Mammary epithelial cell (primary cell): ENCODE measurements at regions of chr6 and their contacts with region 1.

Region 1: DNA sequence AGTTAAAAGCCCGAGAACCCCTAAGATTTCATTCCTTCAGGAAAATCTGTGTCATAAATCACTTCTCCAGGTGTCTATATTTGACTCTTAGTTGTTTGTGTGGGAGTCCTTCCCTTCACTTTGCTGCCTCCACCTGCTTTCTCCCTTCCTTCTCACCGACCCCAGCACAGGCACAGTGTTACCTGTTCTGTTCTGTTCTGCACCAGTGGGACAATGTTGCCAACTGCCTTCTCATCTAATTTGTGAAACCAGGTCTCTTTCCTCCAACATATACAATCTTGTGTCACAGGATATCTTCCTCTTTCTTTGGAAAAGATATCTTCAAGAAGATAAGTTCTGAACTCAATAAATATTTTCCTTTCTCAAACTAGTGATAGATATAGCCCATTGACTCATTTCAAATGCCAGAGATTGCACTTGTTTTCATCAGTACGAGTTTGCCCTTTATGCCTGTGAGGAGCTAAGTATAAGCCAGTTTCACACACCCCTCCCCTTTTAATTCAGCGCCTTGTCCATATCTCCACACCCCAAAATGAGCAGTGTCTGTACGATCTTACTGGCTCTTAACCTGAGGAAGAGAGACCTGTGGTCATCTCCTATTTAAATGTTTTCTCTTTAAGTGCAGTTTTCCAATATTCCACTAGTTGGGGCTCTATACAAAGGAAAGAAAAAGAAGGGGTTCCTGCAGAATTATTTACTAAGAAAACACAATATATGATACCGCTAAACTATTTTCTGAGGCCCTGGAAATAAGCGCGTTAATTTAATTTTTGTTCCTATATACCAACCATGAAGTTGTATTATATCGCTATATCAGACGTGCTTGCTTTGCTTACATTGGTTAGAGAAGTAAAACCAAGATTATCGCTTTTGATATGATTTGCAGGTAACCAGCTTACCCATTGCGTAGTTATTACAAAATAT is 81.6 kb upstream of the PREP start:
- DNase-seq: peak; percentile 57
- H3K4me3 ChIP-seq: no peak overlapping the region
- H3K27ac ChIP-seq: no peak overlapping the region
- H3K4me1 ChIP-seq: peaks cover 24% of the 10 kb centered on the region
- H3K27me3 ChIP-seq: no peaks in the 10 kb centered on the region
- CTCF ChIP-seq: peak; percentile 86 to 93

Region 2: DNA sequence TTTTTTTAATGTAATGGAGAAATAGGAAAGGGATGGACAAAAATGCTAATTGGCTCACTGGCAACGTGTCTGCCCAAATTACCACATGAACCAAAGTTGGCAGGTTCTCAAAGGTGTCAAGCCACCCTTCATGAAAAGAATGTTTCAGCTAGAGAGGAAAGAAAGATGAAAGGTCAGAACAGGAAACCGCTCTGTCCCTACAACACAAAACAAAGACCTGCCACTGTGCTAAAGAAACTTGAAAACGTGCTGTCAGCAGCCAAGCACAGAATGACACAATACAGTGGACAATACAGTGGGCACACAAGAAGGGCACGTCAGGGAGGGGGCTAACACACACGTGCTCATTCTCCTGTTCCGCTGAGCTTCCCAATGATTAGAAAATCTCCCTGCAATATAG is 86.5 kb before region 1 on chr6:
- CTCF ChIA-PET with region 1: no interaction called
- dilution Hi-C with region 1: no loop called
- in situ Hi-C with region 1: no loop called
- intact Hi-C with region 1: no loop called
- DNase-seq: no peak
- H3K4me3 ChIP-seq: no peak overlapping the region
- H3K27ac ChIP-seq: no peak overlapping the region
- H3K4me1 ChIP-seq: peaks cover 36% of the 10 kb centered on the region
- H3K27me3 ChIP-seq: no peaks in the 10 kb centered on the region
- CTCF ChIP-seq: no peak

Region 3: DNA sequence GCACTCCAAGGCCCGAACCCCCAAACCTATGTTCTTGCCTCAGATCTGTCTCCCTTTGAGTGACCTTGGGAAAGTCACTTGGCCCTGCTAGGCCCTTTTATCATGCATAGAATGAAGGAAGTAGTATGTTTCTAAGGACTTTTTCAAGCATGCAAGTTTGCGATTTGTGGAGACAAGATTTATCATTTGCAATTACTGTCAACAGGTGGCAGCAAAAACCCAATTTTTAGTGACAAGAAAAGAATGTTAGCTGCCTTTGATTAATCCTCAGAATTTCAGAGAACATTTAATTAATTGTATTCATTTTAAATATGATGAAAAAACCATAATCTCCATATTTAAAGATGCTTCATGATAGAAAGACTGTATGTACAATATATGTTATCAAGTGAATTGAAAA is 53.3 kb before region 1 on chr6:
- CTCF ChIA-PET with region 1: no interaction called
- dilution Hi-C with region 1: no loop called
- in situ Hi-C with region 1: no loop called
- intact Hi-C with region 1: loop called (anchors 1 kb)
- DNase-seq: peak; percentile 46
- H3K4me3 ChIP-seq: no peak overlapping the region
- H3K27ac ChIP-seq: no peak overlapping the region
- H3K4me1 ChIP-seq: peaks cover 35% of the 10 kb centered on the region
- H3K27me3 ChIP-seq: no peaks in the 10 kb centered on the region
- CTCF ChIP-seq: peak; percentile 57

Region 4: DNA sequence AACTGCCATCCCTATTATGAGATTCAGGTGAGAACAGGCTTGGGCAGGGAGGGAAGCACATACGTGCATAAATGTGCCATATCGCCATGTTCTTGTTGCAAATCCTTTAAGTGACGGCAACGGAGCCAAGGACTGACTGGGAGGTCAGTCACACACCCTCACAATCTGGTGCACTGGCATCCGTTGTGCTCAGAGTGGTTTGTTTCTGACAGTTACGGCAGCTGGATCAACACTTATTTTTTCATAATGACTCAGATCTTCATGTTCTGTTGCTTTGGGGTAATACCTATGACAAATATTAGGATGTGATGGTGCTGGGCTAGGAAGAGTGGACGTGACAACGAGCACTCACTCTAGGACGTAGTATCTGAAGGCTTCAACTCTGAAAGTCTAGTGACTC is 25.5 kb before region 1 on chr6:
- CTCF ChIA-PET with region 1: no interaction called
- dilution Hi-C with region 1: no loop called
- in situ Hi-C with region 1: no loop called
- intact Hi-C with region 1: no loop called
- DNase-seq: peak; percentile 65
- H3K4me3 ChIP-seq: no peak overlapping the region
- H3K27ac ChIP-seq: no peak overlapping the region
- H3K4me1 ChIP-seq: peaks cover 16% of the 10 kb centered on the region
- H3K27me3 ChIP-seq: no peaks in the 10 kb centered on the region
- CTCF ChIP-seq: no peak

Region 5: DNA sequence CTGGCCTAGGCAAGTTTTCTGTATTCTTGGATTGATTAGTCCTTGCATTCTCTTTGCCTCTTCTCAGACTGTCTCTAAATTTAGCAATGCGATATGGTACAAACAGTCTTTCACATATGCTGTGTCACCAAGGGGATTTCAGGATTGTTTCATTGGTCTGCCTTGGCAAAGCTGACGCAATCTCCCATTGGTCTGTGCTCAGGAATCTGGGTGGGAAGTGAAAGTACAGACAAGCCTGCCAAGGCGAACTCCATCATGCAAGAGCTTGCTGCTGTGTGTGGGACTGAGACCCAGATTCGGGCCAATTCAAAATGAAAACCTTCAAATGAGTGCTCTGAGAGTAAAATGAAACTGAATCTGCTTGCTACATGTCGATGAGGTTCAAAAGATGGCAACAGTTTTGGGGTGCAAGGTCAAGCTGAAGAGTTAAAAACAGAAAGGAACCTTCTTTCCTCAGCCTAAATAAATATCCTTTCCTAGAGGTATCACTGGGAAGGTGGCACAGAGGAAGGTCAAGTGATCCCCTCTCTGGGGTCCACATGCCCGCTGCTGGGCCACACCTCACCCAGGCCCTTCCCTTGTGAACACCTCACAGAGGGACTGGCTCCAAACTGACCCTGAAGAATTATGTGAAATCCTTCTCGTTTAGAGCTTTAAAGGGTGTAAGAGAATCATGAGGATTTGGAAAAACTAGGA is 117.2 kb after region 1 on chr6:
- CTCF ChIA-PET with region 1: no interaction called
- dilution Hi-C with region 1: no loop called
- in situ Hi-C with region 1: loop called in 1 of 2 experiments (anchors 10 kb)
- intact Hi-C with region 1: loop called (anchors 1 kb)
- DNase-seq: peak; percentile 100
- H3K4me3 ChIP-seq: no peak overlapping the region
- H3K27ac ChIP-seq: peak overlapping the region; percentile 100
- H3K4me1 ChIP-seq: peaks cover 39% of the 10 kb centered on the region
- H3K27me3 ChIP-seq: no peaks in the 10 kb centered on the region
- CTCF ChIP-seq: no peak

Region 6: DNA sequence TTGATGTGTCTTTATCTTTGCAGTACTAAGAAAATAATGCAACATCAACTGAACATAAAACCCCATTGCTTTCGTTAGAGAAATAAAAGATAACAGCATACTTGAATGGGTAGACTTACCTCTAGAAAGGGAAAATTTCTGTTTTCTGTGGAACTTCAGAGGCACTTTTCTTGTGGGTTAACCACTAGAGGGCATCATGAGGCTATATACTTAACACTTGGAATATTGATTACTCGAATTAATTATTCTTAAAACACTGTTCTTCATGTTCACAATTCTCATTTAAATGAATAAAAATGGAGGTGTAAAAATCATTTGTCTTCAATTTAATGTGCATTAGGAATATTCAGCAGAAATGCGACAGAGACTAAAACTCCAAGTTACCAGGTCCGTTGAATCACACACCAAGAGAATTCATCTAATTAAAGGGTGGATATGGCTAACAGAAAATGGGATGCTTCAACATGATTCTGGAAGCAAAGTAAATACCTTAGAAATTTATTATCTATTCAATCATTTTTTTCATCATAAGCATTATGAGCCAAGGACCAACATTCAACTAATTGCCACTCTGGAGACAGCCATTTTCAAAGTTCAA is 249.2 kb after region 1 on chr6:
- CTCF ChIA-PET with region 1: no interaction called
- dilution Hi-C with region 1: no loop called
- in situ Hi-C with region 1: loop called in 1 of 2 experiments (anchors 10 kb)
- intact Hi-C with region 1: loop called (anchors 1 kb)
- DNase-seq: no peak
- H3K4me3 ChIP-seq: no peak overlapping the region
- H3K27ac ChIP-seq: no peak overlapping the region
- H3K4me1 ChIP-seq: no peaks in the 10 kb centered on the region
- H3K27me3 ChIP-seq: no peaks in the 10 kb centered on the region
- CTCF ChIP-seq: peak; percentile 59 to 62

Region 7: GRCh38 chr6:105835373-105835772 is 350.9 kb after region 1 on chr6:
- CTCF ChIA-PET with region 1: no interaction called
- dilution Hi-C with region 1: no loop called
- in situ Hi-C with region 1: no loop called
- intact Hi-C with region 1: loop called (anchors 5 kb)
- DNase-seq: peak; percentile 64
- H3K4me3 ChIP-seq: no peak overlapping the region
- H3K27ac ChIP-seq: no peak overlapping the region
- H3K4me1 ChIP-seq: peaks cover 12% of the 10 kb centered on the region
- H3K27me3 ChIP-seq: no peaks in the 10 kb centered on the region
- CTCF ChIP-seq: peak; percentile 33 to 56

Region 8: DNA sequence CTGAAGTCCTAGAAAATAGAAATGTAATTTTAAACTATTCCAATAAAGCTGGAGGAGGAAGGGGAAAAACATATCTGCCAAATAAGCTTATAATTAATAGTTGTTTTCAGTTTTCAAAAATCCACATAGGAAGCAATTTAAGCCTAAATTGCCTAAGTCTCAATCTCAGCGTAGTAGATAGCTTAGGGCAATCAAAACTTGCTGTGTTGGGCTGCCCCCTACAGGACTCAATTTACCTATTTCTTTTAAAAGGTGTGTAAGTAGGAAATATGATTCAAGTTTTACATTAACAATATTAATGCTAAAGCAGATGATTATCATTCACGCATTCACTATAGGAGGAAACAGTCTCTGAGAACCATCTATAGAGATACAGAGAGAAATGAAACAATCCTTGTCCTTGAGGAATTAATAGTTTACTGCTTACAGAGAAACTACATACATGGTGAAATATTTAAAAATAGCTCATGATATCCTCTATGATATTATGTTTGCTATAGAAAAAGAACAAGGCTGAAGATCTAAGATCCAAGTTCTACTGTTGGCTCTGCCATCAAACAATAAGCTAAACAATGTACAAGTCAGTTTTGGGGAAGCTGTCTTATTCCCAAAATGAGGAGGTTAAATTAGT is 738.9 kb after region 1 on chr6:
- CTCF ChIA-PET with region 1: no interaction called
- dilution Hi-C with region 1: no loop called
- in situ Hi-C with region 1: no loop called
- intact Hi-C with region 1: loop called (anchors 1 kb)
- DNase-seq: peak; percentile 58
- H3K4me3 ChIP-seq: no peak overlapping the region
- H3K27ac ChIP-seq: no peak overlapping the region
- H3K4me1 ChIP-seq: no peaks in the 10 kb centered on the region
- H3K27me3 ChIP-seq: no peaks in the 10 kb centered on the region
- CTCF ChIP-seq: peak; percentile 53 to 61

Region 9: DNA sequence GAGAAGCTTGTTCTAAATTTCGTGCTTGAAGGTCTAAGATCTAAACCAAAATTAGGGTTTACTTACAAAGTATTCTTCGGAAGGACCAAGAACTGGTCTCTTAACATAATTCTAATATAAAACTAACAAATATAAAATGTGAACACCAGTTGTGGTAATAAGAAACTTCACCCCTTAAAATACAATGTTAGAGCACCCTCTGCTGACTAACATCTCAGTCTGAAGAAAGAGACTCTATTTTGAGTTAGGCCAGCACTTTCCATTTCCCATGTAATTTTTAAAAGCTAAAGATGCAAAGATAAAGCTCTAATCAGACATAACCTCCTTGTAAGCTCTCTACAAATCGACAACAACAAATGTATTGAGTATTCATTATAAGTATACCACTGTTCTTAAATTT is 816.4 kb after region 1 on chr6:
- CTCF ChIA-PET with region 1: no interaction called
- dilution Hi-C with region 1: no loop called
- in situ Hi-C with region 1: loop called in 1 of 2 experiments (anchors 25 kb)
- intact Hi-C with region 1: loop called (anchors 1 kb)
- DNase-seq: peak; percentile 42
- H3K4me3 ChIP-seq: no peak overlapping the region
- H3K27ac ChIP-seq: no peak overlapping the region
- H3K4me1 ChIP-seq: no peaks in the 10 kb centered on the region
- H3K27me3 ChIP-seq: no peaks in the 10 kb centered on the region
- CTCF ChIP-seq: peak; percentile 42 to 54